Caco-2 (cell line): ENCODE measurements at regions of chr10 and their contacts with region 1.

Region 1: DNA sequence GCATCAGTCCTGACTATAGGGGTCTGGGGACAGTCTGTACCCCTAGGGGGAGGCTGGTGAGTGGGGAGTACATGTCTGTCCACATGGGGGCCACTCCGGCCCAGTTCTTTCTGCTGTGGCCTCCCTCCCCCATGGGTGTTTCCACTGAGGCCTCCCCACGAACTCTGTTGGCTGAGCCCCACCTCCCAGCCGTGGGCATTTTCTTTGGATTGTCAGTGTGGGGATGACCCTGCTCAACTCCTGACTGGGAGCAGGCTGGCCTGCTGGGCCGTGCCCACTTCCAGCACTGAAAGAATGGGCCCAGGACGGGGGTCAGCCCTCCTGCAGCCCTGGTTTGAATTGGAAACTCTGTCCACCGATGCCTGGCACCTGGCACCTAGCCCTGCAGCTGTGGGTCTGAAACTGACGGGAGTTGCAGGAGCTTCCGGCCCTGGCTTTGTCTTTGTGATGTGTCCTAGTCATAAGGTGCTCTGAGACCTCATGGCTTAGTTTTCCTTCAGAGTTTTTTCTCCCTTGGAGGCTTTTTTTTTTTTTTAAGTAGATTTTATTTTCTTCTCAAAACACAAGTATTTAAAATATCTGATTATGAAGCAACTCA is 46.5 kb downstream of the LHPP start:
- DNase-seq: no peak
- H3K4me3 ChIP-seq: no peak overlapping the region
- H3K4me3 Mint-ChIP-seq: no peak overlapping the region
- H3K27ac Mint-ChIP-seq: no peak overlapping the region
- H3K4me1 ChIP-seq: no peaks in the 10 kb centered on the region
- H3K4me1 Mint-ChIP-seq: no peaks in the 10 kb centered on the region
- H3K27me3 ChIP-seq: no peaks in the 10 kb centered on the region
- H3K27me3 Mint-ChIP-seq: no peaks in the 10 kb centered on the region
- CTCF ChIP-seq: no peak

Region 2: GRCh38 chr10:124477614-124478363 is 30.4 kb before region 1 on chr10:
- CTCF ChIA-PET with region 1: interaction called, 3 read pairs
- POLR2A ChIA-PET with region 1: no interaction called
- intact Hi-C with region 1: loop called (anchors 2 kb)
- DNase-seq: peak; percentile 61 to 62
- H3K4me3 ChIP-seq: no peak overlapping the region
- H3K4me3 Mint-ChIP-seq: peak overlapping the region; percentile 27
- H3K27ac Mint-ChIP-seq: peak overlapping the region; percentile 48
- H3K4me1 ChIP-seq: peaks cover 38% of the 10 kb centered on the region
- H3K4me1 Mint-ChIP-seq: peaks cover 29% of the 10 kb centered on the region
- H3K27me3 ChIP-seq: no peaks in the 10 kb centered on the region
- H3K27me3 Mint-ChIP-seq: no peaks in the 10 kb centered on the region
- CTCF ChIP-seq: no peak